Activated naive CD4-positive, alpha-beta T cell treated with anti-CD3 and anti-CD28 coated beads, Interleukin-2, amount 10 ng/mL, durations not matched to agents 7 days and 5 days (primary cell): ENCODE measurements at regions of chr3 and their contacts with region 1.

Region 1: GRCh38 chr3:120417272-120417911 is 33.4 kb downstream of the FSTL1 start:
- DNase-seq: peak; percentile 94
- H3K4me3 Mint-ChIP-seq: peak overlapping the region; percentile 75
- H3K27ac Mint-ChIP-seq: no peak overlapping the region
- H3K4me1 Mint-ChIP-seq: peaks cover 19% of the 10 kb centered on the region
- H3K27me3 Mint-ChIP-seq: peaks cover 8% of the 10 kb centered on the region

Region 2: DNA sequence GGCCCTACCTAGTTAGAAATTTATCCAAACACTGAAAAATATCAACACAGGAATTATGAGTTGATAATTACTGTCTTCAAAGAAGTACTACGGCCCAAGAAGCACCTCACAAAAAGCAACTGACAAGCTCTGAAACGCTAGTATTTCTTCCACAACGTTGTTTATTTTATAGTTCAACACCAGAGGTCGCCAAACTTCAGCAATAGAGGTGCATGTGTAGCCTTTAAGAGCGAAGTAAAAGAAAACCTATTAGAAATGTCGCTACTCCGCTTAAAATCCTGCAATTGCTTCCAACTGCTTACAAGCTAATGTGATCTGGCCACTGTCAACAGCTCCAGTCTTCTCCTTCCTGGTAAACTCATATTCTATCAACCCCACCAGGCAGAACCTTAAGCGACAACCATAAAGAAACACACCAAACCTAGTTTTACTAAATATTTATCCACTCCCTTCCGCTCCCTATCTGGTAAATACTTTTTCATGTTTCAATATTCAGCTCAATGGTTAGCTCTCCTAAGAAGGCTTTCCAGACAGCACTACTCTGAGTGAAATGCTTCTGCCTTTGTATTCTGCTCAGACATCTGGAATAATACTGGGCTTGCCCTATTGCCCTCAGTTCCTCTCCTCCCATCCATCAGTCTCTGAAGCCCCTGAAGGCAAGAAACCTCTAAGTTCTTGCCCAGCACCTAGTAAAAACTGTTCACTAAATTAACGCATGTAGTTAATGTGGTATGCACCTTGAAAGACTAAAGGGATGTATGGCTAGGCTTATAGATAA is 525.3 kb before region 1 on chr3:
- CTCF ChIA-PET with region 1: interaction called, 12 read pairs
- DNase-seq: peak; percentile 54
- H3K4me3 Mint-ChIP-seq: no peak overlapping the region
- H3K27ac Mint-ChIP-seq: no peak overlapping the region
- H3K4me1 Mint-ChIP-seq: peaks cover 8% of the 10 kb centered on the region
- H3K27me3 Mint-ChIP-seq: no peaks in the 10 kb centered on the region

Region 3: GRCh38 chr3:120182724-120183524 is 234.5 kb before region 1 on chr3:
- CTCF ChIA-PET with region 1: no interaction called
- DNase-seq: no peak
- H3K4me3 Mint-ChIP-seq: no peak overlapping the region
- H3K27ac Mint-ChIP-seq: no peak overlapping the region
- H3K4me1 Mint-ChIP-seq: no peaks in the 10 kb centered on the region
- H3K27me3 Mint-ChIP-seq: peaks cover 11% of the 10 kb centered on the region

Region 4: DNA sequence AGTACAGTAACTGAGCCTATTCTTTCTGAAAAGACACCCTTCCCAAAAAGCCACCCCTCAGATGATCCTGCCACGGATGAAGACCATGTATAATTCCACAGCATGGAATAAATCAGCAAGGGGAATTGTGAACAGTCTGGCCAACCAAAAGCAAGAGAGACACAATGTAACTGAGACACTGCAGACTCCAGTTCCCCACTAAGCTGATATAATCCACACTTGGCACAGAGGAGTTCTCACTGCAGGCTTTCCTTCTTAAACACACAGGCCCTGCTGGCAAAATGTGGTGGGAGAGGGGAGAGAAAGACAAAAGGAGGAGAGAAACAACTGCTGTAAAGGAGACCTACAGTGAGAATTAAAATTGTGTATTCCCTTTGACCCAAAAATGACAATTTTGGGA is 145.1 kb before region 1 on chr3:
- CTCF ChIA-PET with region 1: no interaction called
- DNase-seq: no peak
- H3K4me3 Mint-ChIP-seq: no peak overlapping the region
- H3K27ac Mint-ChIP-seq: no peak overlapping the region
- H3K4me1 Mint-ChIP-seq: no peaks in the 10 kb centered on the region
- H3K27me3 Mint-ChIP-seq: peaks cover 28% of the 10 kb centered on the region

Region 5: GRCh38 chr3:120348981-120349818 is 68.2 kb before region 1 on chr3 and contains the start of gene LRRC58:
- CTCF ChIA-PET with region 1: interaction called, 18 read pairs
- DNase-seq: peak; percentile 90
- H3K4me3 Mint-ChIP-seq: peak within 1 kb of the TSS; percentile 86
- H3K27ac Mint-ChIP-seq: peak within 1 kb of the TSS; percentile 92
- H3K4me1 Mint-ChIP-seq: peaks cover 46% of the 10 kb centered on the region
- H3K27me3 Mint-ChIP-seq: peaks cover 16% of the 10 kb centered on the region

Region 6: GRCh38 chr3:120558771-120559241 is 141.4 kb after region 1 on chr3:
- CTCF ChIA-PET with region 1: interaction called, 108 read pairs
- DNase-seq: peak; percentile 91
- H3K4me3 Mint-ChIP-seq: peak overlapping the region; percentile 65
- H3K27ac Mint-ChIP-seq: no peak overlapping the region
- H3K4me1 Mint-ChIP-seq: peaks cover 17% of the 10 kb centered on the region
- H3K27me3 Mint-ChIP-seq: peaks cover 12% of the 10 kb centered on the region

Region 7: GRCh38 chr3:120795017-120795648 is 377.7 kb after region 1 on chr3:
- CTCF ChIA-PET with region 1: interaction called, 28 read pairs
- DNase-seq: peak; percentile 90
- H3K4me3 Mint-ChIP-seq: no peak overlapping the region
- H3K27ac Mint-ChIP-seq: no peak overlapping the region
- H3K4me1 Mint-ChIP-seq: no peaks in the 10 kb centered on the region
- H3K27me3 Mint-ChIP-seq: no peaks in the 10 kb centered on the region